ENCODE measurements at regions of chr17 and their contacts with region 1.

Region 1: GRCh38 chr17:51533219-51533618 is 272.9 kb downstream of the UTP18 start:
- DNase-seq: no peak
- ATAC-seq: no peak
- H3K4me3 ChIP-seq: no peak overlapping the region
- H3K27ac ChIP-seq: no peak overlapping the region
- H3K4me1 ChIP-seq: peaks cover 4% of the 10 kb centered on the region; the same call in 2 of the 3 replicates
- CTCF ChIP-seq: no peak
- EP300 ChIP-seq: no peak
- POLR2A ChIP-seq: no peak
- RAD21 ChIP-seq: no peak

Region 2: DNA sequence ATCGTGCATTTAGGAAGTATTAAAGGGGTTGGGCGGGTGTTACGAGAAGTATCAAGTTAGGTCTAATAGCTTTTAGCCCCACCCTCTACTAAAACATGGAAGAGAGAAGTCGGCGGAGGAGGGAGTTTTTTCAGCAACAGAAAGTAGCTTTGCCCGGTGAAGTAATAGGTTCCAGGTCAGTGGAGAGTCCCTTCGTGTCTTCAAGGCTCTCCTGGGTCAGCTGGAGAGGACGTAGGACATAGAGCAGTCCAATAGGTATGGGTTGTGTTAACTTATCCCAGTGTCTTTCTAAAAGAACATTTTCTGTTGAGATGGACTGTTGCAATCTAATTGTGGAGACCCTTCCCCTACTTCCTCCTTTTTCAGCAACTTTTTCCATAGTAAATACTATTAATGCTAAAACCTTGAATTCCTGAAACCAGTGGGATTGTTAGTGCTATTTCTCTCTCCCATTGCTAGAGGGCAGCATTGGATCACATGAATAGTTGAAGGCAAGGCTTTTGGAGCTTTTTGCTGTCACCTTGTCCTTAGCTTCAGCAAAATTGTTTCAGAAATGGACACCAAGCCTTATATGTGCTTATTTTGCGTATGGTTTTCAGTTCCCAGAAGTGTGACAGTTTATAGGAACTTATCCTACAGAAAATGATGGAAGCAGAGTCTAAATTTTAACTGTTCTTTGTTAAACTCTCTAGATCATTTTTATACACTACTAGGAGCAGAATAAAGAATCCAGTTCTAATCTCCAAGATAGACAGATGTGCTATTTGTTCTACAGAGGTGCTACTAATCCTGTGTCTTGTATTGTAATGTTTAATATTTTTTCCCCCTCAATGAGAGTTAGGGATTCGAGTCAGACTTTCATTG is 234.5 kb before region 1 on chr17:
- CTCF ChIA-PET with region 1: interaction called, 41 read pairs
- POLR2A ChIA-PET with region 1: no interaction called
- DNase-seq: peak; percentile 51 to 67
- ATAC-seq: peak; percentile 79 to 82
- H3K4me3 ChIP-seq: no peak overlapping the region
- H3K27ac ChIP-seq: no peak overlapping the region
- H3K4me1 ChIP-seq: no peaks in the 10 kb centered on the region
- CTCF ChIP-seq: peak; percentile 89
- EP300 ChIP-seq: no peak
- POLR2A ChIP-seq: no peak
- RAD21 ChIP-seq: peak; percentile 80 to 82

Region 3: GRCh38 chr17:51325471-51325870 is 207.7 kb before region 1 on chr17:
- CTCF ChIA-PET with region 1: no interaction called
- POLR2A ChIA-PET with region 1: no interaction called
- DNase-seq: no peak
- ATAC-seq: no peak
- H3K4me3 ChIP-seq: no peak overlapping the region
- H3K27ac ChIP-seq: no peak overlapping the region
- H3K4me1 ChIP-seq: no peaks in the 10 kb centered on the region
- CTCF ChIP-seq: no peak
- EP300 ChIP-seq: no peak
- POLR2A ChIP-seq: no peak
- RAD21 ChIP-seq: no peak

Region 4: GRCh38 chr17:51362818-51363585 is 170.2 kb before region 1 on chr17:
- CTCF ChIA-PET with region 1: interaction called, 186 read pairs
- POLR2A ChIA-PET with region 1: no interaction called
- DNase-seq: no peak
- ATAC-seq: no peak; a peak in 1 of 6 replicates
- H3K4me3 ChIP-seq: no peak overlapping the region
- H3K27ac ChIP-seq: no peak overlapping the region
- H3K4me1 ChIP-seq: no peaks in the 10 kb centered on the region
- CTCF ChIP-seq: no peak
- EP300 ChIP-seq: no peak
- POLR2A ChIP-seq: no peak
- RAD21 ChIP-seq: no peak

Region 5: GRCh38 chr17:51381262-51381661 is 152.0 kb before region 1 on chr17:
- CTCF ChIA-PET with region 1: interaction called, 35 read pairs
- POLR2A ChIA-PET with region 1: no interaction called
- DNase-seq: no peak
- ATAC-seq: no peak; a peak in 1 of 6 replicates
- H3K4me3 ChIP-seq: no peak overlapping the region
- H3K27ac ChIP-seq: no peak overlapping the region
- H3K4me1 ChIP-seq: no peaks in the 10 kb centered on the region
- CTCF ChIP-seq: no peak
- EP300 ChIP-seq: no peak
- POLR2A ChIP-seq: no peak
- RAD21 ChIP-seq: no peak

Region 6: GRCh38 chr17:51428666-51429495 is 104.3 kb before region 1 on chr17:
- CTCF ChIA-PET with region 1: interaction called, 11 read pairs
- POLR2A ChIA-PET with region 1: no interaction called
- DNase-seq: no peak
- ATAC-seq: no peak
- H3K4me3 ChIP-seq: no peak overlapping the region
- H3K27ac ChIP-seq: peak overlapping the region in 1 of 2 experiments; percentile 7; a peak in 1 of 6 replicates
- H3K4me1 ChIP-seq: peaks cover 6% of the 10 kb centered on the region; the same call in 2 of the 3 replicates
- CTCF ChIP-seq: no peak
- EP300 ChIP-seq: no peak
- POLR2A ChIP-seq: no peak
- RAD21 ChIP-seq: no peak

Region 7: GRCh38 chr17:51454456-51454978 is 78.7 kb before region 1 on chr17:
- CTCF ChIA-PET with region 1: no interaction called
- POLR2A ChIA-PET with region 1: no interaction called
- DNase-seq: no peak
- ATAC-seq: no peak
- H3K4me3 ChIP-seq: no peak overlapping the region
- H3K27ac ChIP-seq: no peak overlapping the region
- H3K4me1 ChIP-seq: peaks cover 17% of the 10 kb centered on the region
- CTCF ChIP-seq: no peak
- EP300 ChIP-seq: no peak
- POLR2A ChIP-seq: no peak
- RAD21 ChIP-seq: no peak

Region 8: GRCh38 chr17:51548125-51548524 is 14.9 kb after region 1 on chr17:
- CTCF ChIA-PET with region 1: interaction called, 47 read pairs
- POLR2A ChIA-PET with region 1: no interaction called
- DNase-seq: no peak
- ATAC-seq: no peak
- H3K4me3 ChIP-seq: no peak overlapping the region
- H3K27ac ChIP-seq: no peak overlapping the region
- H3K4me1 ChIP-seq: no peaks in the 10 kb centered on the region
- CTCF ChIP-seq: no peak
- EP300 ChIP-seq: no peak
- POLR2A ChIP-seq: no peak
- RAD21 ChIP-seq: no peak